ENCODE measurements at regions of chr11 and their contacts with region 1.

Region 1: DNA sequence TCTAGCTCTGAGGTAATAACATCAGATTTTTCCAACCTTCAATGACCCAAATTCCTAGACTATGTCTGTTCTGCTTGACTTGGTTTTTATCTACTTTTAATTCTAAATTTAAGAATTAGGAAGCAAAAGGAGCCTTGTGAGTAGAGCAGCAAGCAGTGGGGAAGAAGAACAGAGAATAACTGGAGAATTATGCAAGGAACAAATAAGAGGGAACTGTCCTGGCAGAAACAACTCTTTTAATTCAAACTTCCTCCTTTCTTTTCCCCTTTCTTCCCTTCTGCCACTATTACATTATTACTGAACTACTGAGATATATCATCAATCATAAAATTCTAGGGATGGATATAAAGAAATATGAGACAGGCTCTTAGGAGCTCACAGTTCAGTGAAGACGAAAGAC is 276.1 kb downstream of the SBF2 start:
- DNase-seq: no peak
- ATAC-seq: no peak
- H3K4me3 ChIP-seq: no peak overlapping the region
- H3K27ac ChIP-seq: no peak overlapping the region
- H3K4me1 ChIP-seq: peaks cover 0 to 33% (median 15%) of the 10 kb centered on the region in 9 donors
- H3K27me3 ChIP-seq: no peaks in the 10 kb centered on the region
- CTCF ChIP-seq: no peak

Region 2: DNA sequence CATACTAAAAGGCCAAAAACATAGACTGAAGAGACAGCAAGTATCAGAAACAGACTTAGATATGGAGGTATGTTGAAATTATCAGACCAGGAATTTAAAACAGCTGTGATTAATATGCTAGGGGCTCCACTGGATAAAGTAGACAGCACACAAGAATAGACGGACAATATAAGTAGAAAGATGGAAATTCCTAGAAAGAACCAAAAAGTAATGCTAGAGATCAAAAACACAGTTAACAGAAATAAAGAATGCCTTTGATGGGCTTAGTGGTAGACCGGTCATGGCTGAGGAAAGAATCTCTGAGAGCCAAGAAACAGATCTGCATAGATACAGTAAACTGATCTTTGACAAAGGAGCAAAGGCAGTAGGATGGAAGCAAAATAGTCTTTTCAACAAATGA is 103.8 kb before region 1 on chr11:
- intact Hi-C with region 1: no loop called
- DNase-seq: no peak
- ATAC-seq: no peak
- H3K4me3 ChIP-seq: no peak overlapping the region
- H3K27ac ChIP-seq: no peak overlapping the region
- H3K4me1 ChIP-seq: no peaks in the 10 kb centered on the region
- H3K27me3 ChIP-seq: no peaks in the 10 kb centered on the region
- CTCF ChIP-seq: no peak

Region 3: DNA sequence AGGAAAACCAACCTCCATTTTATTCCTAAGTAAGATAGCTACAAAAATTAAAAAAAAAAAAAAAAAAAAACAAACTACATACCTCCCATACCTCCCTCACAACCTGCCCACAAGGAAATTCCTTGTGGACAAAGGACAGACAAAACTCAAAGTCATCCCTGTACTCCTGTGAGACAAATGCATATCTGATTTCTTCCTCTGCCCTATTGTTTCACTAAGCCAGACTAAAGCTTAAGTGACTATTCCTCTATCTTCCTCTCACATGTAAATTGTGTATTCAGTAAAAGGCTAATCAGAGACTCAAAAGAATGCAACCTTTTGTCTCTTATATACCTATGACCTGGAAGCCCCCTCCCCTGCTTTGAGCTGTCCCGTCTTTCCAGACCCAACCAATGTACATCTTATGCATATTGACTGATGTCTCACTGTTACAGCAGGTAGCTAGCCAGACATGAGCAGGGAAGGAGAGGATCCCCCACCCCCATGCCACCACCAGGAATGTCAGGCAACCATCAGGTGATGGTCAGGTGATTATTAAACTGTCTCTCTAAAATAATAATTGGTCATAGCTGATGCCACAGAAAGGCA is 13.3 kb before region 1 on chr11:
- intact Hi-C with region 1: loop called in 1 of 10 experiments (anchors 1 kb)
- DNase-seq: no peak
- ATAC-seq: no peak
- H3K4me3 ChIP-seq: no peak overlapping the region
- H3K27ac ChIP-seq: no peak overlapping the region
- H3K4me1 ChIP-seq: no peaks in the 10 kb centered on the region
- H3K27me3 ChIP-seq: no peaks in the 10 kb centered on the region
- CTCF ChIP-seq: no peak

Measured in heart right ventricle (tissue), 16 donors.